ENCODE measurements at regions of chr1 and their contacts with region 1.

Region 1: GRCh38 chr1:59061876-59062275 is 235.0 kb upstream of the FGGY start:
- DNase-seq: no peak
- H3K4me3 ChIP-seq: peak overlapping the region in 1 of 8 donors; percentile 26
- H3K27ac ChIP-seq: peak overlapping the region in 7 of 8 donors; percentile 49 to 72 (median 60)
- H3K4me1 ChIP-seq: peaks cover 6 to 36% (median 14%) of the 10 kb centered on the region in 6 donors
- H3K27me3 ChIP-seq: no peaks in the 10 kb centered on the region
- CTCF ChIP-seq: no peak
- POLR2A ChIP-seq: peak in 1 of 3 donors; percentile 13

Region 2: GRCh38 chr1:58816072-58816746 is 245.7 kb before region 1 on chr1:
- intact Hi-C with region 1: loop called (anchors 10 kb)
- DNase-seq: peak; percentile 99
- H3K4me3 ChIP-seq: peak overlapping the region; percentile 43 to 83 (median 62)
- H3K27ac ChIP-seq: peak overlapping the region; percentile 85 to 97 (median 93)
- H3K4me1 ChIP-seq: peaks cover 17 to 64% (median 44%) of the 10 kb centered on the region in 6 donors
- H3K27me3 ChIP-seq: no peaks in the 10 kb centered on the region
- CTCF ChIP-seq: peak in 6 of 11 experiments; percentile 4 to 30 (median 16)
- POLR2A ChIP-seq: no peak